Head of caudate nucleus (tissue), 42 donors: ENCODE measurements at regions of chr21 and their contacts with region 1.

Region 1: GRCh38 chr21:34526618-34527290 is 14.7 kb upstream of the KCNE1 start:
- DNase-seq: peak in 9 of 42 donors; percentile 23 to 61 (median 35)

Region 2: DNA sequence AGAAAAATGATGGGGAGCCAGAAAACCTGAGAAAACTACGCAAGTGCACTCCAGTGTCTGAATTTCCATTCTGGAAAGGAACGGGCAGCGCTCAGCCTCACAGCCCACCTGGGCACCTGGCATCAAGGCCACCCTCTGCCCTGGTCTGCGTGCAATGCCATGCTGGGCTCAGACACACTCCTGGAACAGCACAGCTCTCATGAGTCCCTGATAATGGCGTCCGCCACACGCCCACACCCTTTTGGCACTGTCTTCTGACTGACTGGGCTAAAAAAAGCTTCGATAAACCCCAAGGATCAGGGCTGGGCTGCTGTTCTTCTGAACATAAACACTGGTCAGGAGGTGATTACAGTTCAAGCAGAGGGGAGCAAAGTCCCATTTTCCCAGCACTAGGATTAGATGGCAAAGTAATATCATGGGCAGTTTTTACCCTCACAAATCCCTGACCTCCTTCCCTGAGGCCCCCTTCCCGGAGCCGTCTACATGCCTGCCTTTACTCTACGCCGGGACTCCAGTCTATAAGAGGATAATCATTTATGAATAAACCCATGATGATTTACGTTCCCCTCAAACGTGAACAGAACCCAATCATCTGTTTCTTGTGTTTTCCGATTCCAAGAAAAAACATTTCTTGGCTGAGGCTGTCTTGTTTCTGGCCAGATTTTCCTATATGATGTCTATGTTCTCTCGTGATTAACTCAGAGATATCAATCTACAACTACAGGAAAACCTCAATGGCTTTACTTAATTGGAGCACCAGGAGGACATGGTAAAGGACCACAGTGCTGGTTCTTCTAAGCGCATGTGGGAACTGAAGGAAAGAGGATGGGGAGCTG is 65.6 kb after region 1 on chr21:
- intact Hi-C with region 1: loop called (anchors 5 kb)
- DNase-seq: peak in 13 of 42 donors; percentile 34 to 71 (median 52)